Naive thymus-derived CD8-positive, alpha-beta T cell (primary cell): ENCODE measurements at regions of chr16 and their contacts with region 1.

Region 1: GRCh38 chr16:14285513-14286385 is 214.6 kb downstream of the MRTFB start:
- DNase-seq: peak; percentile 89 to 99 (median 96)
- ATAC-seq: peak; percentile 76 to 78
- H3K4me3 Mint-ChIP-seq: peak overlapping the region; percentile 85 to 97 (median 94)
- H3K27ac Mint-ChIP-seq: peak overlapping the region; percentile 83 to 98 (median 92)
- H3K4me1 Mint-ChIP-seq: peaks cover 10 to 24% (median 22%) of the 10 kb centered on the region in 4 donors
- H3K27me3 Mint-ChIP-seq: peaks cover 0 to 3% (median 0%) of the 10 kb centered on the region in 5 donors

Region 2: GRCh38 chr16:14205666-14206065 is 80.1 kb before region 1 on chr16:
- POLR2A ChIA-PET with region 1: no interaction called
- DNase-seq: no peak
- ATAC-seq: no peak
- H3K4me3 Mint-ChIP-seq: no peak overlapping the region
- H3K27ac Mint-ChIP-seq: no peak overlapping the region
- H3K4me1 Mint-ChIP-seq: peaks cover 0 to 12% (median under 1%) of the 10 kb centered on the region in 4 donors
- H3K27me3 Mint-ChIP-seq: no peaks in the 10 kb centered on the region

Region 3: GRCh38 chr16:14300705-14301168 is 15.0 kb after region 1 on chr16:
- POLR2A ChIA-PET with region 1: interaction called, 18 read pairs
- DNase-seq: peak in 7 of 10 donors; percentile 18 to 74 (median 41)
- ATAC-seq: peak; percentile 60 to 66
- H3K4me3 Mint-ChIP-seq: peak overlapping the region; percentile 76 to 92 (median 88)
- H3K27ac Mint-ChIP-seq: peak overlapping the region in 8 of 10 donors; percentile 3 to 89 (median 80)
- H3K4me1 Mint-ChIP-seq: peaks cover 8 to 25% (median 18%) of the 10 kb centered on the region in 4 donors
- H3K27me3 Mint-ChIP-seq: peaks cover 0 to 11% (median 0%) of the 10 kb centered on the region in 5 donors

Region 4: GRCh38 chr16:14309001-14309886 is 23.5 kb after region 1 on chr16:
- POLR2A ChIA-PET with region 1: interaction called, 24 read pairs
- DNase-seq: peak in 9 of 10 donors; percentile 22 to 77 (median 55)
- ATAC-seq: peak; percentile 82 to 88
- H3K4me3 Mint-ChIP-seq: peak overlapping the region; percentile 75 to 92 (median 86)
- H3K27ac Mint-ChIP-seq: peak overlapping the region; percentile 83 to 96 (median 92)
- H3K4me1 Mint-ChIP-seq: peaks cover 17 to 51% (median 35%) of the 10 kb centered on the region in 4 donors
- H3K27me3 Mint-ChIP-seq: peaks cover 0 to 3% (median 0%) of the 10 kb centered on the region in 5 donors

Region 5: GRCh38 chr16:14629919-14630619 is 344.3 kb after region 1 on chr16 and contains the start of gene PARN:
- POLR2A ChIA-PET with region 1: interaction called, 14 read pairs
- DNase-seq: peak; percentile 95 to 98 (median 98)
- ATAC-seq: peak; percentile 60 to 64
- H3K4me3 Mint-ChIP-seq: peak within 1 kb of the TSS; percentile 84 to 99 (median 94)
- H3K27ac Mint-ChIP-seq: peak within 1 kb of the TSS; percentile 92 to 100 (median 98)
- H3K4me1 Mint-ChIP-seq: peaks cover 25 to 63% (median 56%) of the 10 kb centered on the region in 4 donors
- H3K27me3 Mint-ChIP-seq: no peaks in the 10 kb centered on the region
- polyA plus RNA-seq, gene PARN: 40.8 to 50.8 (median 44.0) TPM